ENCODE measurements at regions of chr17 and their contacts with region 1.

Region 1: DNA sequence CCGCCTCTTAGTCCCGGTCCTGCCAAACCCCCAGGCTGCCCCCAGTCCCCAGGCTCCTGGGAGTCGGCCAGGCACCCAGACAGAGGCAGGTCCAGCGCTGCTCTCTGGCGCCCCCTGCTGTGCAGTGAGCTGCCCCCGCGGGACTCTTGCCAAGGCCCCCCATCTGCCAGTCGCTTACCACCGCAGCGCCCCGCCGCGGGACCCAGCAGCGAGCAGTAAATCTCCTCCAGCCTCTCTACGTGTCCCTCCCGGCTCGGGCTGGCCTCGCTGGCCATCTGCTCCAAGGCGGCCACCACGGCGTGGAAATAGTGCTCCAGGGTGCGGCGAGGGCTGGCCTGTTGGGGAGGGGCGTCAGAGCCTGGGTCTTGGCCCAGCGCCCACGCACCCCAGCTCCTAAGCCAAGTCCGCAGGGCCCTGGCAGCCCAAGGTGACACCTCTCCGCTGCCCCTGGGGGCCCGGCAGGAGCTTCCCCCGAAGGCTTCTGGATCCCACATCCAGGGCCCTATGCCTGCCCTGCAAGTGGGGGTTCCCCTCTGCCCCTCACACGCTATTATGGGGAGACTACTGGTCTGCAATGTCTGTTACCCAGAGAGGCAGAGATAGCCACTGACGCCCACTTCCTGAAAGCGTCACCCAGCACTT is 33.7 kb upstream of the MFSD6L start:
- DNase-seq: no peak
- H3K4me3 ChIP-seq: no peak overlapping the region
- H3K27ac ChIP-seq: no peak overlapping the region
- H3K4me1 ChIP-seq: no peaks in the 10 kb centered on the region
- H3K27me3 ChIP-seq: peaks cover 3% of the 10 kb centered on the region
- CTCF ChIP-seq: peak; percentile 30 to 60

Region 2: DNA sequence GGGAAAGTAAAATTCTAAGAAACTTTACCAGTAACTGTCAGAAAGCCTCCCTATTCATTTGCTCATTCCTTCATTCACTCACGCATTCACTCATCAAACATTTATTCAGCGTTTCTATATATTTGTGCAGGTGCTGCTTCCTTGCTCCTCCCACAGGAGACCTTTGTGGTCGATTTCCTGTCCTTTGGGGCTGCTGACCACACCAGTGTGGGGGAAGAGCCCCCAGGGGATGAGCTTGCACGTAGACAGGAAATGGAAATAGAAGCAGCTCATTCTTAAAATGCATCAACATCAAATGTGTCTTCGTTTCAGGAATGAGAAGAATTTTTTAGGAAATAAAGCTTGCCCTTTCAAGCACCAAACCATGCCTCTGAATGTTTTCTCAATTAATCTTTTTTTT is 25.1 kb after region 1 on chr17:
- CTCF ChIA-PET with region 1: interaction called, 16 read pairs
- dilution Hi-C with region 1: no loop called
- in situ Hi-C with region 1: no loop called
- intact Hi-C with region 1: no loop called
- DNase-seq: peak; percentile 87
- H3K4me3 ChIP-seq: no peak overlapping the region
- H3K27ac ChIP-seq: peak overlapping the region; percentile 18
- H3K4me1 ChIP-seq: peaks cover 43% of the 10 kb centered on the region
- H3K27me3 ChIP-seq: no peaks in the 10 kb centered on the region
- CTCF ChIP-seq: no peak

Region 3: GRCh38 chr17:9120471-9120870 is 287.6 kb after region 1 on chr17:
- CTCF ChIA-PET with region 1: no interaction called
- dilution Hi-C with region 1: no loop called
- in situ Hi-C with region 1: no loop called
- intact Hi-C with region 1: no loop called
- DNase-seq: no peak
- H3K4me3 ChIP-seq: no peak overlapping the region
- H3K27ac ChIP-seq: no peak overlapping the region
- H3K4me1 ChIP-seq: no peaks in the 10 kb centered on the region
- H3K27me3 ChIP-seq: no peaks in the 10 kb centered on the region
- CTCF ChIP-seq: peak; percentile 11 to 38

Region 4: DNA sequence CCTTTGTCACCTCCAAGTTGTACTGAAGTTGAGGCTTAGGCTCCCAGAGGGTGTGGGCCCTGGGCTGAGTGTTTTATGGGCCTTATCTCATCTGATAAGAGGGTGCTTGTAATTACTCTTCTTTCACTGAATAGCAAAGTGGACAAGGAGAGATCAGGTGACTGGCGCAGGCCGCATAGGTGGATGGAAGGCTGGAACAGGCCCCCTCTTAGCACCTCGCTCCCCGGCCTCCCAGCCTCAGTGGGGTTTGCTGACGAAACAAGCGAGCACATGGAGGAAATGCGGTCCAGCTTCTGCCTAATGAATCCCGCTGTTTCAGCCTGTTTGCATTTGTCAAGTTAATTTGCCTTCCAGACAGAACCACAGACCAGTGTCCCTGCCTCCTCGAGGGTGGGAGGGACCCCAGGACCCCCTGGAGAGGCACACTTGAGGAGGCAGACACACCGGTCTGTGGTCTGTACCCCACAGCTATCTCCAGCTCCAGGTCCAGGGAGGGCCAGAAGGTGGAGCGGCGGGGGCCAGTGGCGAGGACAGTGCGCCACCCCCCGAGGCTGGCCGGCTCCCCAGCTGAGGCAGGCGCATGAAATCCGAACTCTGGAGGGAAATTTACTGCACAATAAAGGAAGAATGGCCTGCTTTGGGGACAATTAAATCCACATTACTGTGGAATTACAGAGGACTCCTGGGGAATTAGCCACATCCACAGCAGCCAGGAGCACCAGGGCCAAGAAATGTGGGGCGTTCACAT is 311.8 kb after region 1 on chr17:
- CTCF ChIA-PET with region 1: no interaction called
- dilution Hi-C with region 1: no loop called
- in situ Hi-C with region 1: no loop called
- intact Hi-C with region 1: no loop called
- DNase-seq: no peak
- H3K4me3 ChIP-seq: no peak overlapping the region
- H3K27ac ChIP-seq: no peak overlapping the region
- H3K4me1 ChIP-seq: no peaks in the 10 kb centered on the region
- H3K27me3 ChIP-seq: no peaks in the 10 kb centered on the region
- CTCF ChIP-seq: no peak

Measured in mammary epithelial cell (primary cell).